HCT116 (cell line): ENCODE measurements at regions of chr10 and their contacts with region 1.

Region 1: GRCh38 chr10:132458593-132459300 is 61.7 kb downstream of the PWWP2B start:
- DNase-seq: no peak
- ATAC-seq: peak; percentile 83
- H3K4me3 ChIP-seq: no peak overlapping the region
- H3K27ac ChIP-seq: no peak overlapping the region
- H3K4me1 ChIP-seq: peaks cover 0 to 8% of the 10 kb centered on the region in 2 experiments; a peak in 1 of 4 replicates
- H3K27me3 ChIP-seq: no peaks in the 10 kb centered on the region
- CTCF ChIP-seq: peak; percentile 69 to 73 (median 72)
- POLR2A ChIP-seq: no peak
- RAD21 ChIP-seq: peak; percentile 94

Region 2: DNA sequence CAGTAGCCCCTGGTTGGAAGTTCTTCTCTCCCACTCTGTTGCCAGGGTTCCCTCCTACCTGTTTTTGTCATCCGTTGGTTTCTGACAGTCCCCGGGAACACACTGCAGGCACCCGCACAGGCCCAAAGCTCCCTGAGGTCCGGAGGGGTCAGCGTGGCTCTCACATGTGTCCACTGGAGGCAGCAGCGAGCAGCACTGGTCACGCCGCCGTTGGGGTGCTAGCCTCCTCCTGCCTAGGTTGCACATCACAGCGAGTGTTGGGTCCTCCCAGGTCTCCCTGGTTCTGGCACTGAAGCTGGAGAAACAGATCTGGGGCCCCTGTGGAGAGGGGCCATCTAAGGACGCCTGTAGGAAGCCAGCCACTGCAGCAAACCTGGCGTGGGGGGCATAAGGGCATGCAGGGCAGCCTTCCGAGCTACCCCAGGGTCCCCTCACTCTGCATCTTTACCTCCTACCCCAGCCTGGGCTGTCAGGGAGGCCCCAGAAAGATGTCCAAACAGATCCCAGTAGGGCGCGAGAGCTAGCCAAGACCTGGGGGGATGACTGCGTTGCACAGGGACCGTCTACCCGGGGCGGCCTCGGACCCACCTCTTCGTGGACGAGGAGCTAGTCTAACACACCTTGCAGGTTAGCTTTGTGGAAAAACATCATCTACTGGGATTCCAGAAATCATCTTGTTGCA is 97.8 kb before region 1 on chr10:
- CTCF ChIA-PET with region 1: no interaction called
- POLR2A ChIA-PET with region 1: no interaction called
- RAD21 ChIA-PET with region 1: no interaction called
- intact Hi-C with region 1: no loop called
- DNase-seq: no peak
- ATAC-seq: peak; percentile 99
- H3K4me3 ChIP-seq: no peak overlapping the region
- H3K27ac ChIP-seq: no peak overlapping the region
- H3K4me1 ChIP-seq: no peaks in the 10 kb centered on the region
- H3K27me3 ChIP-seq: no peaks in the 10 kb centered on the region
- CTCF ChIP-seq: peak; percentile 9 to 77 (median 64); a peak in 4 of 6 replicates
- POLR2A ChIP-seq: no peak
- RAD21 ChIP-seq: peak; percentile 34; the same call in 1 of the 2 replicates

Region 3: GRCh38 chr10:132482090-132482800 is 23.5 kb after region 1 on chr10:
- CTCF ChIA-PET with region 1: no interaction called
- POLR2A ChIA-PET with region 1: no interaction called
- RAD21 ChIA-PET with region 1: no interaction called
- intact Hi-C with region 1: no loop called
- DNase-seq: no peak
- ATAC-seq: no peak
- H3K4me3 ChIP-seq: no peak overlapping the region
- H3K27ac ChIP-seq: no peak overlapping the region
- H3K4me1 ChIP-seq: no peaks in the 10 kb centered on the region
- H3K27me3 ChIP-seq: no peaks in the 10 kb centered on the region
- CTCF ChIP-seq: no peak
- POLR2A ChIP-seq: no peak
- RAD21 ChIP-seq: no peak

Region 4: DNA sequence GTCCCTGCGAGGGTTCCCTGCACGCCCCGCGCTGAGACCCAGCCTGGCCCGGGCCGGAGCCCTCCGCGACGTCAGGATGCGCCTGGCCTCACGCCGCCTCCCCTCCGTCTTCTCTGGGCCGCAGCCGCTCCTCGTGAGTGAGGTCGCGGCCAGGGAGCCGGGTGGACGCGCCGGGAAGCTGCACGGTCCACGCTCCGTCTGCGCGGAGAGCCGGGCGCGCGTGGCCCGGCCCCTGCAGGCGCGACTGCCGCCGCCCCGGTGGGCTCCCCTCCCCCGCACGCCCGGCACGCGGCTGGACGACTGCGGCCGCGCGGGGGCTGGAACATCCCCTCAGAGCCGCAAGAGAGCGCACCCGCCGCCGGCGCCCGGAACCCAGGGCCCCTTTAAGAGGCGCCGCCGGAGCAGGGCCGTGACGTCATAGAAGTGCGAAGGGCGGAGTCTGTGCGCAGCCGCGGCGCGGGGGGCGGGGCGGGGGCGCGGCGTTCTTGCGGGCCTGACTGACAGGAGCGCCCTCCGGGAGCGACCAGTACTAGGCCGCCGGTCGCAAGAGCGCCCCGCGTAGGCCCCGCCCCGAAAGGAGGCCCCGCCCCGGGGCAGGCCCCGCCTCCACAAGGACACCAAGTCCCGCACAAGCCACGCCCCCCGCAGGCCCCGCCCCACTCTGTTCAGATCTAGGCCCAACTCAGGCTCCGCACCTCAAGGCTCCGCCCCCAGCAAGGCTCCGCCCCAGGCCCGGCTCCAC is 78.4 kb after region 1 on chr10:
- CTCF ChIA-PET with region 1: no interaction called
- POLR2A ChIA-PET with region 1: no interaction called
- RAD21 ChIA-PET with region 1: no interaction called
- intact Hi-C with region 1: loop called (anchors 5 kb)
- DNase-seq: peak; percentile 85
- ATAC-seq: peak; percentile 85
- H3K4me3 ChIP-seq: peak overlapping the region; percentile 45 to 61
- H3K27ac ChIP-seq: peak overlapping the region; percentile 72; the same call in 1 of the 2 replicates
- H3K4me1 ChIP-seq: peaks cover 16 to 39% of the 10 kb centered on the region in 2 experiments
- H3K27me3 ChIP-seq: no peaks in the 10 kb centered on the region
- CTCF ChIP-seq: no peak
- POLR2A ChIP-seq: peak; percentile 27
- RAD21 ChIP-seq: peak; percentile 14; the same call in 1 of the 2 replicates

Region 5: GRCh38 chr10:132575356-132576201 is 116.8 kb after region 1 on chr10:
- CTCF ChIA-PET with region 1: interaction called, 3 read pairs
- POLR2A ChIA-PET with region 1: no interaction called
- RAD21 ChIA-PET with region 1: no interaction called
- intact Hi-C with region 1: loop called (anchors 2 kb)
- DNase-seq: no peak
- ATAC-seq: no peak
- H3K4me3 ChIP-seq: no peak overlapping the region
- H3K27ac ChIP-seq: no peak overlapping the region
- H3K4me1 ChIP-seq: peaks cover 18 to 22% of the 10 kb centered on the region in 2 experiments
- H3K27me3 ChIP-seq: no peaks in the 10 kb centered on the region
- CTCF ChIP-seq: no peak
- POLR2A ChIP-seq: no peak
- RAD21 ChIP-seq: no peak

Region 6: GRCh38 chr10:132637477-132638129 is 178.9 kb after region 1 on chr10:
- CTCF ChIA-PET with region 1: no interaction called
- POLR2A ChIA-PET with region 1: no interaction called
- RAD21 ChIA-PET with region 1: no interaction called
- intact Hi-C with region 1: loop called (anchors 1 kb)
- DNase-seq: peak; percentile 7
- ATAC-seq: peak; percentile 77
- H3K4me3 ChIP-seq: no peak overlapping the region
- H3K27ac ChIP-seq: no peak overlapping the region
- H3K4me1 ChIP-seq: no peaks in the 10 kb centered on the region
- H3K27me3 ChIP-seq: no peaks in the 10 kb centered on the region
- CTCF ChIP-seq: peak; percentile 37 to 80 (median 55)
- POLR2A ChIP-seq: no peak
- RAD21 ChIP-seq: peak; percentile 84

Region 7: GRCh38 chr10:132654702-132655661 is 196.2 kb after region 1 on chr10:
- CTCF ChIA-PET with region 1: no interaction called
- POLR2A ChIA-PET with region 1: no interaction called
- RAD21 ChIA-PET with region 1: no interaction called
- intact Hi-C with region 1: no loop called
- DNase-seq: peak; percentile 7
- ATAC-seq: peak; percentile 82
- H3K4me3 ChIP-seq: no peak overlapping the region
- H3K27ac ChIP-seq: no peak overlapping the region
- H3K4me1 ChIP-seq: no peaks in the 10 kb centered on the region
- H3K27me3 ChIP-seq: no peaks in the 10 kb centered on the region
- CTCF ChIP-seq: peak; percentile 50 to 76 (median 69); a peak in 5 of 6 replicates
- POLR2A ChIP-seq: no peak
- RAD21 ChIP-seq: peak; percentile 80